Activated T-helper 1 cell treated with anti-CD3 and anti-CD28 coated beads, Interleukin-12 subunit alpha, Interleukin-12 subunit beta, Interleukin-2, Interleukin-4 antibody, amounts not matched to agents 30 ng/mL and 10 ng/mL and 1 ng/mL, durations not matched to agents 14 hours and 24 hours and 36 hours (primary cell): ENCODE measurements at regions of chr5 and their contacts with region 1.

Region 1: DNA sequence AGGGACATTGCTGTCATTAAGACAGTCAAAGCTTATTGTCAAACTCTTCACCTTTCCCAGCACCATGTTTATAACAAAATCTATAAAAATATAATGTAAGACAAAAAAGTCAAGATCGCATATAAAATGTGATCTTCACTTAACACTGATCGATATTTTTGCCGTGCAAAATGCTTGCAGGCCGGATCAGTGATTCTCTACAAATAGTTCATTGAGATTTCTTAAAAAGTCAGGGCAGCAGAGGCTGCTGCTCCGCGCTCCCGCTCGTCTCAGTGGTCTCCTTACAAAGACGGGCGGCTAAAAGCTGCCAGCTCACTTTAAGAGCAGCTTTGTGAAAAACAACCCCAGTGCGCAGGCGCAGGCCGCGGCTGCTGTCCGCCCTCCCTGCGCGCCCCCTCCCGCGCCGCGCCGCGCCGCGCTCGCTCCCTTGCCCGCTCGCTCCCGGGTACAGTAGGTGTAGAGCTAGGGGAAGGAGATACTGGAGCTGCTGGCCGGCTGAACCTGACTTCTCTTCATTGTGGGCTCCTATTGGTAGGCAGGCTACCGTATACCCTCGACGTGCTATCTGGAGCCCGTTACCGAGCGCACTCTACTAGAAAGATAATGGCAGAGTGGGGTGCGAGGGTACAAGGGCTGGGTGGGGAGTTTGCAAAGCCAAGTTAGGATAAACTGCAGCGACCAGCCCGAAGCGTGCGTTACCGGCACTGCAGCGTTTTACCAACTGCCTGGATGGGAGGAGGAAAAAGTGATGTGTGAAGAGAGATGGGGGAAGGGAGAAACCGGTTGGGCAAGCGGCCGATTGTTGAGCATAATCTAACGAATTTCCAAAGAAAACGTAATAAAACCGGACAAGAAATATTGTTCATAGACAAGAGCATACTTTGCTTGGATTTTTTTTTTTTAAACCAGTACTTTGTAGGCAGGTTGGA is at the start of gene ARRDC3:
- DNase-seq: peak; percentile 96
- H3K4me3 Mint-ChIP-seq: peak within 1 kb of the TSS; percentile 98
- H3K27ac Mint-ChIP-seq: peak within 1 kb of the TSS; percentile 100
- H3K4me1 Mint-ChIP-seq: peaks cover 35% of the 10 kb centered on the region
- H3K27me3 Mint-ChIP-seq: peaks cover 3% of the 10 kb centered on the region
- total RNA-seq, gene ARRDC3: 10.5 and 11.5 TPM in 2 replicates

Region 2: GRCh38 chr5:90866333-90866732 is 517.0 kb before region 1 on chr5:
- intact Hi-C with region 1: loop called (anchors 1 kb)
- DNase-seq: no peak
- H3K4me3 Mint-ChIP-seq: no peak overlapping the region
- H3K27ac Mint-ChIP-seq: no peak overlapping the region
- H3K4me1 Mint-ChIP-seq: no peaks in the 10 kb centered on the region
- H3K27me3 Mint-ChIP-seq: peaks cover 5% of the 10 kb centered on the region

Region 3: DNA sequence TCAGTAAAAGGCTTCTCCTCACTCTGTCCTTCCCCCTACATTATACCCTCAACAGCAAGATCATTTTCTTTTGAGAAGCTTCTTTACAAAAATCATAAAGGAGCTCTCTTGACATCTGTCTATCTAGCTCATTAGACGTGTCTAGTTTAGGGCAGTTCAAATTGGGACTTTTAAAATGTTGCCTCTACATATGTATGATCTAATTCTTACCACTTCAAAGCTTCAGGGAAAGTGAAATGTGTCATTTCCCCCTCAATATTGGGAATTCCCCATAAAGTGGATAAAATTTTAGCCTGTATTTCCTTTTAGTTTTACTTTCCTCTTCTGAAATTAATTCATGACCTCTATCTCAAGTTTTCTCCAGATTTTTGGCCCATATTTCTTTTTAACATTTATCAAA is 323.9 kb before region 1 on chr5:
- intact Hi-C with region 1: loop called (anchors 1 kb)
- DNase-seq: no peak
- H3K4me3 Mint-ChIP-seq: no peak overlapping the region
- H3K27ac Mint-ChIP-seq: no peak overlapping the region
- H3K4me1 Mint-ChIP-seq: peaks cover 19% of the 10 kb centered on the region
- H3K27me3 Mint-ChIP-seq: peaks cover 48% of the 10 kb centered on the region

Region 4: DNA sequence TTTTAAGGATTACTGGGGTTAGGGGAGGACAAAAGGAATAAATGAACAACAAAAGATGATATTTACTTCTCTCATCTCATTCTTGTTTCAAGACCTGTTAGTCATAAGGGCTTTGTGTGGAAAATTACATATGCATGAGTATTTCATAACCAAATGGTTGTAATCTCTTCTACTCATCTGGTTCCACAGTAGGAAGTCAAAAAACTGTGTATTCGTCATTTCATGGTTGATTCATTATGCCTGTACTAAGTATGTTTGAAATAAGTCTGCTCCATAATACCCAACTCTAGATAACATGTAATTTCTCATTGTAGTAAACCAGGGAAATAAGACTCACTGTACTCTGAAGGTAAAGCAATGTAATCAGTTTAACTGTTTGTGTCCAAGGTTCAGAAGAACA is 213.0 kb before region 1 on chr5:
- intact Hi-C with region 1: loop called (anchors 1 kb)
- DNase-seq: no peak
- H3K4me3 Mint-ChIP-seq: no peak overlapping the region
- H3K27ac Mint-ChIP-seq: peak overlapping the region; percentile 24
- H3K4me1 Mint-ChIP-seq: peaks cover 17% of the 10 kb centered on the region
- H3K27me3 Mint-ChIP-seq: peaks cover 11% of the 10 kb centered on the region

Region 5: DNA sequence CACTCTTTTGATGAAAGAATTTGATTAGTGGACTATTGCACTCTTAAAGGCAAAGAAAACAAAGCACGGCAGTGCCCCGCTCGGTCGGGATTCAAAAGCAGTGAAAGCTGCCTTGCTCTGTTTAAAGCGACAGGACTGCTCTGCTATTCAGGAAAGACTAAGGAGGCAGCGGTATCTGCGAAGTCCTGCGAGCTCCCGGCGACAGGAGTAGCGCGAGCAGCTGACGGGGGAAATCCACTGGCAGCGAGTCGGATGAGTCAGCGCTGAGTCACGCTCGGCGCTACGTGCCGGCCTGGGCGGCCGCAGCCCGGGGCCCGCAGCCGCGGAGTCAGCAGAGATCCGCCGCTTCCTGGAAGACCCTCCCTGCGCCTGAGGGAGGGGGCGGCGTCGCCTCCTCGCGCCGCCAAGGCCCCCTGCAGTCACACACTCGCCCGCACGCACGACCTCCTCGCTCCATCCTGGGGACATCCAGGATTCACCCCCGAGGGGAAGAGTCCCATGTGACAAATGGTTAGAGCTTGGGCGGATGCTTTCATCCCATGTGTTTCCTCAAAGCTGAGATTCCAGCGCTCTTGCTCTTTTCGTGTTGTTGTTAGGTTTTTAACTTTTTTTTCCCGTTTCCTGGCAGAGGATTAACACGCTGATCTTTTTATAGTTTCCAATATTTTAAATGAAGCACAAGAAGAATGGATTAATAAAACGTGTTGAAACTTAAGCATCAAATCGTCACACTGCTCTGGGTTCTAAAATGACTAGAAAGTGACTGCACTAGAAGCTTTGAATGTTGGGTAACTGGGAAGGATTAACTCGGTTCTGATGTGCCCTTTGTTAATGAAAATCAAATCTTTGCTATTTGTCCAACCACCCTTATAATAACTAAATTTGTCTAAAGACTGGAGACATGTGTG is 102.7 kb before region 1 on chr5:
- intact Hi-C with region 1: loop called (anchors 1 kb)
- DNase-seq: peak; percentile 84
- H3K4me3 Mint-ChIP-seq: peak overlapping the region; percentile 81
- H3K27ac Mint-ChIP-seq: peak overlapping the region; percentile 82
- H3K4me1 Mint-ChIP-seq: peaks cover 40% of the 10 kb centered on the region
- H3K27me3 Mint-ChIP-seq: peaks cover 4% of the 10 kb centered on the region

Region 6: DNA sequence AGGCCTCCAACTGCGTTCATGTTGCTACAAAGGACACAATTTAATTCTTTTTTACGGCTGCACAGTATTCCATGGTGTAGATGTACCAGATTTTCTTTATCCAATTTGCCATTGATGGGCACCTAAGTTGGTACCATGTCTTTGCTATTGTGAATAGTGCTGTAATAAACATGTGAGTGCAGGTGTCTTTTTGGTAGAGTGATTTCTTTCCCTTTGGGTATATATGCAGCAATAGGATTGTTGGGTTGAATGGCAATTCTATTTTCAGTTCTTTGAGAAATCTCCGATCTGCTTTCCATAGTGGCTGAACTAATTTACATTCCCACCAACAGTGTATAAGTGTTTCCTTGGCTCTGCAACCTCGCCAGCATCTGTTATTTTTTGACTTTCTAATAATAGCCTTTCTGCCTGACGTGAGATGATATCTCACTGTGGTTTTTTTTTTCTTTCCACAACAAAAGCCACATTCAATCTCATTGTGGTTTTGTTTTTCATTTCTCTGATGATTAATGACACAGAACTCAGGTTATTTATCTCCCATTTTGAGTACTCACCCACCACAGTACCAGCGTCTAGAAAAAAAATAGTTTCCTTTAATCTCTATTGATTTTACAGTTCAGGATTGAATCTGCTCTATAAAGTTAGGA is 22.1 kb before region 1 on chr5:
- intact Hi-C with region 1: loop called (anchors 1 kb)
- DNase-seq: no peak
- H3K4me3 Mint-ChIP-seq: no peak overlapping the region
- H3K27ac Mint-ChIP-seq: peak overlapping the region; percentile 67
- H3K4me1 Mint-ChIP-seq: peaks cover 14% of the 10 kb centered on the region
- H3K27me3 Mint-ChIP-seq: peaks cover 23% of the 10 kb centered on the region